Activated T-helper 2 cell treated with anti-CD3 and anti-CD28 coated beads, Interferon-gamma antibody, Interleukin-2, Interleukin-4, amounts not matched to agents 10 μg/mL and 5 μg/mL and 100 μg/mL, durations not matched to agents 14 hours and 24 hours and 36 hours (primary cell): ENCODE measurements at regions of chrX and their contacts with region 1.

Region 1: DNA sequence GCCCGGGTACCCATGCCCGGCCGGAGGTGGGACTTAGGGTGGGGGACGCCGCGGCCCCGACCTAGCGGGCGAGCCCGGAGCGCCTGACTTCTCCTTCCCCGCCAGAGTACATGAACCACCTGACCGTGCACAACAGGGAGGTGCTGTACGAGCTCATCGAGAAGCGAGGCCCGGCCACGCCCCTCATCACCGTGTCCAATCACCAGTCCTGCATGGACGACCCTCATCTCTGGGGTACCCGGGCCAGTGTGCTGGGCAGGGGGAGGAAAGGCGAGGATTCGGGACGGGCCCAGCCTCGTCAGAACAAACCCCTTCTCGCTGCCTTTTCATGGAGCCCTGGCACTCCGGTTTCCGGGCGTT is 622 bp downstream of the TAFAZZIN start:
- DNase-seq: peak; percentile 34
- H3K4me3 Mint-ChIP-seq: peak overlapping the region; percentile 79
- H3K27ac Mint-ChIP-seq: peak overlapping the region; percentile 74
- H3K4me1 Mint-ChIP-seq: peaks cover 11% of the 10 kb centered on the region
- H3K27me3 Mint-ChIP-seq: no peaks in the 10 kb centered on the region

Region 2: GRCh38 chrX:154428176-154429010 is 16.4 kb after region 1 on chrX and contains the start of gene ATP6AP1:
- intact Hi-C with region 1: loop called (anchors 1 kb)
- DNase-seq: peak; percentile 87
- H3K4me3 Mint-ChIP-seq: peak within 1 kb of the TSS; percentile 77
- H3K27ac Mint-ChIP-seq: peak within 1 kb of the TSS; percentile 72
- H3K4me1 Mint-ChIP-seq: peaks cover 19% of the 10 kb centered on the region
- H3K27me3 Mint-ChIP-seq: no peaks in the 10 kb centered on the region
- total RNA-seq, gene ATP6AP1: 47.4 and 48.9 TPM in 2 replicates